ENCODE measurements at regions of chr20 and their contacts with region 1.

Region 1: GRCh38 chr20:62623488-62624324 is 18.6 kb upstream of the SLCO4A1 start:
- DNase-seq: peak; percentile 98 to 99
- H3K4me3 ChIP-seq: peak overlapping the region; percentile 80
- H3K27ac ChIP-seq: peak overlapping the region; percentile 99
- H3K4me1 ChIP-seq: peaks cover 80% of the 10 kb centered on the region
- H3K27me3 ChIP-seq: no peaks in the 10 kb centered on the region
- CTCF ChIP-seq: no peak

Region 2: GRCh38 chr20:62302341-62303058 is 321.2 kb before region 1 on chr20 and contains the start of gene ADRM1:
- CTCF ChIA-PET with region 1: no interaction called
- POLR2A ChIA-PET with region 1: no interaction called
- intact Hi-C with region 1: loop called (anchors 5 kb)
- DNase-seq: peak; percentile 86 to 99
- H3K4me3 ChIP-seq: peak within 1 kb of the TSS; percentile 99
- H3K27ac ChIP-seq: peak within 1 kb of the TSS; percentile 82
- H3K4me1 ChIP-seq: peaks cover 20% of the 10 kb centered on the region
- H3K27me3 ChIP-seq: no peaks in the 10 kb centered on the region
- CTCF ChIP-seq: peak; percentile 89
- total RNA-seq, gene ADRM1: 172 and 173 TPM in 2 replicates

Region 3: DNA sequence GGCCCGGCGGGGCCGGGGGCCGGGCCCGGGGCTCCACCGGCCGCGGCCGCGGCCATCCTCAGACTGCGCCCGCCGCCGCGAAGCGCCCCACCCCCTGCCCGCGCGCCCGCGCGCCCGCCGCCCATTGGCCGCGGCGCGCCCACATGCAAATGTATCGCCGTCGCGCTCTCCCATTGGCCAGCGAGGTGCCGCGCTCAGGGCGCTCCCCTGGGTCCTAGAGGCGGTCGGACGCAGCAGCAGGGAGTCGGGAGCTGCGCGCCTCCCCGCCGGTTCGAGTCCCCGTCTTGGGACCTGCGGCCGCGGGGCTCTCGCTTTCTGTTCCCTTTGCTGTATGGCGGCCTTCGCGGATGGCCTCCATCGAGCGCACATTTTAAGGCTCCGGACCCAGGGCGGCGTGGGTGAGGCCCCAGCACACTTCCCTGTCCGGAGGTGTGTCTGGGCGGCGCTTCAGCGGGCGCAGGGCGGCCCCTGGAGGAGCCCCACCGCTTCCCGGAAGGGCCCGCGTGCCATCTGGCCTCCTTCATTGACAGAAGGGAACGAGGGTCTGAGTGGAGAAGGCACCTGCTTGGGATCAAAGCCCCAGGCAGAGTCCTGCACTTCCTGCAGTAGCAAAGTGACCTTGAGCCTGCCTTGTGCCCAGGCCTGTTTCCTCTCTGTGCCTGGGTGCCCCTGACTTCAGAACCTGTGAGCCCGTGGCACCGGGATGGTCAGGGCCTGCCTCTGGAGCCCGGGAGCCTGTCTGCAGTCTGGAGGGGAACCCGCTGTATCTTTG is 216.3 kb before region 1 on chr20 and contains the start of gene CABLES2:
- CTCF ChIA-PET with region 1: no interaction called
- POLR2A ChIA-PET with region 1: no interaction called
- intact Hi-C with region 1: loop called (anchors 5 kb)
- DNase-seq: peak; percentile 85 to 96
- H3K4me3 ChIP-seq: peak within 1 kb of the TSS; percentile 72
- H3K27ac ChIP-seq: no peak within 1 kb of the TSS
- H3K4me1 ChIP-seq: peaks cover 18% of the 10 kb centered on the region
- H3K27me3 ChIP-seq: no peaks in the 10 kb centered on the region
- CTCF ChIP-seq: peak; percentile 35; the same call in 1 of the 2 replicates
- total RNA-seq, gene CABLES2: 11.2 and 14.1 TPM in 2 replicates

Region 4: GRCh38 chr20:62508603-62509051 is 115.1 kb before region 1 on chr20:
- CTCF ChIA-PET with region 1: no interaction called
- POLR2A ChIA-PET with region 1: interaction called, 28 read pairs
- intact Hi-C with region 1: no loop called
- DNase-seq: peak; percentile 30 to 48
- H3K4me3 ChIP-seq: no peak overlapping the region
- H3K27ac ChIP-seq: no peak overlapping the region
- H3K4me1 ChIP-seq: no peaks in the 10 kb centered on the region
- H3K27me3 ChIP-seq: peaks cover 10% of the 10 kb centered on the region
- CTCF ChIP-seq: no peak

Region 5: DNA sequence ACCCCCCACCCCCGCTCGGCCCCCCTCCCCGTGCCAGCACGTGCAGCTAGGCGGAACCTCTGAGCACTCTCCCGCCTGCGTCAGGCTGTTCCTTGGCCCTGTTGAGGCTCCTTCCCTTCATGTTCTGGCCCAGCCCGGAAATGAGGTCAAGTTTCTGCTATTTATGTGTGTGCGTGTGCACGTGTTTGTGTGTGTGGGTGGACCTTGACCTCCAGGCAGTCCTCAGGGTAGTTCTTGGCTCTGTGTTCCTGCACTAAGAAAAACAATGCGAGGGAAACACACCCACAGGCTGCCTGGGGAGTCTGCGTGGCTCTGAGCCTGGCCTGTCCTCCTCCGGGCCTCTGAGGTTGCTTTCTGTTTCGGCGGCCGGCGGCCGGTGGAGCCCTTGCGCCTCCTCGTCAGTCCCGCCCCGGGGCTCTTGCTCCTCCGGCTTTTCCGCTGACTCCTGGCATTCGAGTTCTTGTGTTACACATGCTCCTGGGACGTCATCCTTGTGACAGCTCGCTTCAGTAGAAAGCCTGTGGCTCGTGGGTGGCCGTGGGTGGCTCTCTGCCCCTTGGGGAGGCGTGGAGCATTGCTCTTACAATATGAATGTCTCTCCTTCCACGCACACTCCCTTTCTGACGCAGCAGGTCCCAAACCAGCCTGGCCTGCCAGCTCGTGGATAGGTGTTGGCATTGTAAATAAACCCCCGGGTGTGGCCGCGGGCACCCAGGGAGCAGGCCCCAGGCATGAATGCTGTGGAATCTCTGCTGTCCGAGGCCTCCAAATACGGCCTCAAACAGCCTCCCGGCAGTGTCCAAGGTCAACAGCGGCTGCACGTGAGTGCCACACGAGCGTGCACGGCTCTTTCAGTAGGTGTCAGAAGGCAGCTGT is 28.6 kb after region 1 on chr20:
- CTCF ChIA-PET with region 1: no interaction called
- POLR2A ChIA-PET with region 1: interaction called, 5 read pairs
- intact Hi-C with region 1: loop called (anchors 1 kb)
- DNase-seq: peak; percentile 94
- H3K4me3 ChIP-seq: 0 out of 2 replicates have a peak overlapping the region, but pooled peaks have one; percentile 19
- H3K27ac ChIP-seq: peak overlapping the region; percentile 59
- H3K4me1 ChIP-seq: peaks cover 36% of the 10 kb centered on the region
- H3K27me3 ChIP-seq: no peaks in the 10 kb centered on the region
- CTCF ChIP-seq: no peak

Region 6: DNA sequence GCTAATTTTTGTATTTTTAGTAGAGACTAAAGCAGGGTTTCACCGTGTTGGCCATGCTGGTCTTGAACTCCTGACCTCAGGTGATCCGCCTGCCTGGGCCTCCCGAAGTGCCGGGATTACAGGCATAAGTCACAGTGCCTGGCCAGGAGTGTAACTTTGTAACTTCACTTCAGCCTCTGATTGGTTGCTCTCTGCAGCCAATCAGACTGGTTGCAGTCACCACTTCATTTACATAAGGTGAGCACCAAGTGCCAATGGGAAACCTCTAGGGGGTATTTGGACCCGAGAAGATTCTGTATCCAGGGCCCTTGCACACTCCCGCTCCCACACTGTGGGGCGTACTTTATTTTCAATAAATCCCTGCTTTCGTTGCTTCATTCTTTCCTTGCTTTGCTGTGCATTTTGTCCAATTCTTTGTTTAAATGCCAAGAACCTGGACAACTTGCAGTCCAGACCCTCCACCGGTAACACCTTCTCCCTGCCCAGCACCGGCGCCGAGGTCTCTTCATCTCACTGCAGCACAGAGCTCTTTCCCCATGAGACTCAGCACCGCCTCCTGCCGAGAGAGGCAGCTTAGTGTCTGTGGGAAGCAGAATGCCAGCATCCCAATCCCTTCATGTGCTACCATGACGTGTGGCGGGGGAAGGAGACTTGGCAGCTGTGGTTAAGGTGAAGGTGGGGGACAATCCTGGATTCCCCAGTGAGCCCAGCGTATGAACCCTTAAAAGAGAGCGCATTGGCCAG is 158.6 kb after region 1 on chr20:
- CTCF ChIA-PET with region 1: no interaction called
- POLR2A ChIA-PET with region 1: no interaction called
- intact Hi-C with region 1: no loop called
- DNase-seq: no peak
- H3K4me3 ChIP-seq: no peak overlapping the region
- H3K27ac ChIP-seq: no peak overlapping the region
- H3K4me1 ChIP-seq: no peaks in the 10 kb centered on the region
- H3K27me3 ChIP-seq: no peaks in the 10 kb centered on the region
- CTCF ChIP-seq: no peak

Region 7: GRCh38 chr20:62808211-62808865 is 184.6 kb after region 1 on chr20:
- CTCF ChIA-PET with region 1: no interaction called
- POLR2A ChIA-PET with region 1: no interaction called
- intact Hi-C with region 1: loop called (anchors 5 kb)
- DNase-seq: peak in 1 of 2 experiments; percentile 68
- H3K4me3 ChIP-seq: no peak overlapping the region
- H3K27ac ChIP-seq: no peak overlapping the region
- H3K4me1 ChIP-seq: peaks cover 14% of the 10 kb centered on the region
- H3K27me3 ChIP-seq: no peaks in the 10 kb centered on the region
- CTCF ChIP-seq: peak; percentile 99

Measured in PC-9 (cell line).